Activated CD4-positive, alpha-beta memory T cell treated with anti-CD3 and anti-CD28 coated beads for 36 hours (primary cell): ENCODE measurements at regions of chr9 and their contacts with region 1.

Region 1: GRCh38 chr9:93566408-93567270 is 9.7 kb upstream of the PHF2 start:
- DNase-seq: peak; percentile 99
- H3K4me3 Mint-ChIP-seq: peak overlapping the region; percentile 86
- H3K27ac Mint-ChIP-seq: peak overlapping the region; percentile 88
- H3K4me1 Mint-ChIP-seq: peaks cover 25% of the 10 kb centered on the region
- H3K27me3 Mint-ChIP-seq: no peaks in the 10 kb centered on the region

Region 2: DNA sequence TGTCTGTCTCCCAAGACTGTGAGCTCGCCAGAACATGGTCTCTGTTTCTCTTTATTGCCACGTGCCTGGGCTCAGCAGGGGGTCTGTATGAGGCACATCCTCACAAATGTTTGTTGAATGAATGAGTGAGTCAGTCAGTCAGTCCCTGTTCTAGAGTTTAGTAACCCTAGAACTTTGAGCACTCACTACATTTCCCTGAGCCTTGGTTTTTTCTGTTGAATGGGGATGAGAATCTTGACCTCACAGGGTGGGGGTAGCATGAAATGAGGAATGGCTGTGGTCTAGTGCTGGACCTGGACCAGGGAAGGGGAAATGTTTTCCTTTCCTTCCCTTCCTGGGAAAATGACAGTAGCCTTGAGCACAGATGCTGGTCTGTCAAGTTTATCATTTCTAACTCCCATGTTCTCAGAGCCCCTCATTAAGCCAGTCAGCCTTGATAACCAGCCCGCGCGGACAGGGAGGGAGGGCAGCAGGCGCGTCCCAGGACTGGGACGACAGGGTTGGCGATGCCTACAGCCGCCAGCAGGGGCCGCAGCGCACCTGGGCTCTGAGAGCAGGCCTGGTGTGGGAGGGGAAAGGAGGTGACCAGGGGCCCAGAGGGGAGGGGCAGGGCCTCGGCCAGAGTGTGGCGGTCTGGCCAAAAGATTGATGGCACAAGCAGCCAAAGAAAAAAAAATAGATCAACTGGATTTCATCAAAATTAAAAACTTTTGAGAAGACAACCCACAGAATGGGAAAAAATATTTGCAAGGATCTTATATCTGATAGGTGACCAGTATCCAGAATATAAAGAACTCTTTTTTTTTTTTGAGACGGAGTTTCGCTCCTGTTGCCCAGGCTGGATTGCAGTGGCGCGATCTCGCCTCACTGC is 406.8 kb before region 1 on chr9:
- CTCF ChIA-PET with region 1: interaction called, 5 read pairs
- POLR2A ChIA-PET with region 1: no interaction called
- intact Hi-C with region 1: loop called (anchors 5 kb)
- DNase-seq: peak; percentile 84
- H3K4me3 Mint-ChIP-seq: no peak overlapping the region
- H3K27ac Mint-ChIP-seq: no peak overlapping the region
- H3K4me1 Mint-ChIP-seq: peaks cover 24% of the 10 kb centered on the region
- H3K27me3 Mint-ChIP-seq: no peaks in the 10 kb centered on the region

Region 3: GRCh38 chr9:93464395-93464794 is 102.2 kb before region 1 on chr9:
- CTCF ChIA-PET with region 1: interaction called, 12 read pairs
- POLR2A ChIA-PET with region 1: interaction called, 8 read pairs
- intact Hi-C with region 1: no loop called
- DNase-seq: no peak
- H3K4me3 Mint-ChIP-seq: peak overlapping the region; percentile 45
- H3K27ac Mint-ChIP-seq: peak overlapping the region; percentile 94
- H3K4me1 Mint-ChIP-seq: peaks cover 84% of the 10 kb centered on the region
- H3K27me3 Mint-ChIP-seq: no peaks in the 10 kb centered on the region

Region 4: GRCh38 chr9:93549611-93550010 is 17.0 kb before region 1 on chr9:
- CTCF ChIA-PET with region 1: interaction called, 17 read pairs
- POLR2A ChIA-PET with region 1: no interaction called
- intact Hi-C with region 1: no loop called
- DNase-seq: no peak
- H3K4me3 Mint-ChIP-seq: no peak overlapping the region
- H3K27ac Mint-ChIP-seq: peak overlapping the region; percentile 15
- H3K4me1 Mint-ChIP-seq: no peaks in the 10 kb centered on the region
- H3K27me3 Mint-ChIP-seq: no peaks in the 10 kb centered on the region

Region 5: GRCh38 chr9:93630806-93631411 is 64.3 kb after region 1 on chr9:
- CTCF ChIA-PET with region 1: no interaction called
- POLR2A ChIA-PET with region 1: no interaction called
- intact Hi-C with region 1: no loop called
- DNase-seq: no peak
- H3K4me3 Mint-ChIP-seq: no peak overlapping the region
- H3K27ac Mint-ChIP-seq: no peak overlapping the region
- H3K4me1 Mint-ChIP-seq: peaks cover 3% of the 10 kb centered on the region
- H3K27me3 Mint-ChIP-seq: no peaks in the 10 kb centered on the region

Region 6: DNA sequence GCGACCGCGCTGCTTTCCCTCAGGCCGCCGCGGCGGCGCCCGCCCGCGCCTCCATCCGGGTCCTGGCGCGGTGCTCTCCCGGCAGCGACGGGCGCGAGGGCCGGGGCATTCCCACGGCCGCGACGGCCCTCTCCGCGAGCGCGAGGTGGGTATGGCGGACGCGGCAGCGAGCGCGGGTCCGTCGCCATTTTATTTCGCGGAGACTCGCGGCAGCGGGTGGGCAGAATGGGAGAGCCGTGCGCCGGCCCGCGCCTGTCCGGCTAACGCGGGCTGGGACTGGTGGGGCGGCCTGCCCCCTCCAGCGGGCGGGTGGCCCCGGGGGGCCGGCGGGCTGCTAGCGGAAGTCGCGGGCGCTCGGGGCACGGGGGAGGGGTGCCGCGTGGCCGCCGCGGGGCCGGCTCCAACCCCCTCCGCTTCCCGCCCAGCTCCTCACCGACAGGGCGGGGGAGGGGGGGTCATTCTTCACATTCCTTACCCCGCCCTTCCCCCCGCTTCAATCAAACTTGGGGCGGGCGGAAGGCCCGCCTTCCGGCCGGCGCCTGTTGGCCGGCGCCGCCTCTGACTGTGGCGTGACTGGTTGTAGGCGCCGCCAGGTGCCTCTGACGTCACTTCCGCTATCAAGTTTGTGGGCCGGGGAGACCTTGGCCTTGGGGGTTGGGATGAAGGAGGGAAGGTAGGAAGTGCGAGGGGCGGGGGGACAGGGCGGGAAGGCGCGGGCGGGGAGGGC is 599.8 kb after region 1 on chr9:
- CTCF ChIA-PET with region 1: no interaction called
- POLR2A ChIA-PET with region 1: no interaction called
- intact Hi-C with region 1: loop called (anchors 10 kb)
- DNase-seq: peak; percentile 97
- H3K4me3 Mint-ChIP-seq: peak overlapping the region; percentile 81
- H3K27ac Mint-ChIP-seq: peak overlapping the region; percentile 81
- H3K4me1 Mint-ChIP-seq: peaks cover 43% of the 10 kb centered on the region
- H3K27me3 Mint-ChIP-seq: no peaks in the 10 kb centered on the region